IMR-90 (cell line): ENCODE measurements at regions of chr17 and their contacts with region 1.

Region 1: GRCh38 chr17:45584092-45585036 is 93.8 kb upstream of the PLEKHM1 start:
- DNase-seq: peak; percentile 36
- ATAC-seq: peak; percentile 65
- H3K4me3 ChIP-seq: peak overlapping the region; percentile 81
- H3K27ac ChIP-seq: peak overlapping the region; percentile 87
- H3K4me1 ChIP-seq: peaks cover 3% of the 10 kb centered on the region
- H3K27me3 ChIP-seq: no peaks in the 10 kb centered on the region
- CTCF ChIP-seq: no peak
- POLR2A ChIP-seq: no peak
- RAD21 ChIP-seq: no peak

Region 2: GRCh38 chr17:45729294-45729907 is 145.0 kb after region 1 on chr17:
- CTCF ChIA-PET with region 1: no interaction called
- POLR2A ChIA-PET with region 1: no interaction called
- dilution Hi-C with region 1: no loop called
- in situ Hi-C with region 1: no loop called
- intact Hi-C with region 1: no loop called
- DNase-seq: no peak
- ATAC-seq: no peak
- H3K4me3 ChIP-seq: no peak overlapping the region
- H3K27ac ChIP-seq: no peak overlapping the region
- H3K4me1 ChIP-seq: no peaks in the 10 kb centered on the region
- H3K27me3 ChIP-seq: peaks cover 14% of the 10 kb centered on the region
- CTCF ChIP-seq: no peak
- POLR2A ChIP-seq: no peak
- RAD21 ChIP-seq: no peak

Region 3: GRCh38 chr17:46742565-46743270 is 1158.4 kb after region 1 on chr17:
- CTCF ChIA-PET with region 1: no interaction called
- POLR2A ChIA-PET with region 1: no interaction called
- dilution Hi-C with region 1: no loop called
- in situ Hi-C with region 1: loop called (anchors 25 kb)
- intact Hi-C with region 1: no loop called
- DNase-seq: peak; percentile 93
- ATAC-seq: peak; percentile 93
- H3K4me3 ChIP-seq: no peak overlapping the region
- H3K27ac ChIP-seq: peak overlapping the region; percentile 18; the same call in 1 of the 2 replicates
- H3K4me1 ChIP-seq: peaks cover 9% of the 10 kb centered on the region
- H3K27me3 ChIP-seq: no peaks in the 10 kb centered on the region
- CTCF ChIP-seq: no peak
- POLR2A ChIP-seq: no peak
- RAD21 ChIP-seq: no peak